Endothelial cell of umbilical vein (primary cell): ENCODE measurements at regions of chr15 and their contacts with region 1.

Region 1: GRCh38 chr15:85302271-85302670 is 78.1 kb upstream of the AKAP13 start:
- DNase-seq: no peak
- H3K4me3 ChIP-seq: no peak overlapping the region
- H3K27ac ChIP-seq: no peak overlapping the region
- H3K4me1 ChIP-seq: no peaks in the 10 kb centered on the region
- H3K27me3 ChIP-seq: no peaks in the 10 kb centered on the region
- CTCF ChIP-seq: no peak
- POLR2A ChIP-seq: no peak

Region 2: DNA sequence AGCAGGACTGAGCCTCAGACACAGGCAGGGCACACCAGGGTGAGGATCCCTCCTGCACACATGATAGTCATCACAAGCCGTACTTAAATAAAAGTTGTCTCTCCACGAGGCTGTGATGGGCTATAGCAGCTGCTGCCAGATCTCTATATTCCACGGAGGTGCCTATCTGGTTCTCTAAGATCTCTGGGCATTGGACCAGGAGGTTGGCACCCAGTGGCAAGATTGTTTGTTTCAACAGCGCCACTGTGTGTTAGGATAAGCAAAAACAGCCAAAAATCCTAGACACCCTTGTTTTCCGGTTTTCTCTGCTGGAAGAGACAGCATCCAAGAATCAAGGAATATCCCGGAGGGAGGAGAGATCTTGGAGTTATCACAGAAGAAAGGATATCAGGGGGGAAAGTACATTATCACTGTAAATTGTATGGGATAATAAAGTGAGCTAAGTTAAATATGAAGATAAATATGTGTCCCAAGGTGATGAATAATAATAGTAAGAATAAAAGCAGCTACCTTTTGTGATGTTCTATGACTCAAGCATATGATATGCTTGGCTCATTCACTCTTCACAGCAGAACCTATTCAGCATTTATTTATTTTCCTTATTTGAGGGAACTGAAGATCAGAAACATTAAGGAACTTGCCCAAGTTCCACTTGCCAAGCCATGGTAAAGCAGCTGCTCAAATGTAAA is 12.4 kb before region 1 on chr15:
- CTCF ChIA-PET with region 1: interaction called, 11 read pairs
- POLR2A ChIA-PET with region 1: no interaction called
- dilution Hi-C with region 1: no loop called
- intact Hi-C with region 1: no loop called
- DNase-seq: peak; percentile 46
- H3K4me3 ChIP-seq: no peak overlapping the region
- H3K27ac ChIP-seq: no peak overlapping the region
- H3K4me1 ChIP-seq: no peaks in the 10 kb centered on the region
- H3K27me3 ChIP-seq: peaks cover 10 to 18% of the 10 kb centered on the region in 2 experiments
- CTCF ChIP-seq: peak; percentile 45 to 49
- POLR2A ChIP-seq: no peak